ENCODE measurements at regions of chr4 and their contacts with region 1.

Region 1: GRCh38 chr4:98694076-98694475 is 35.7 kb upstream of the TSPAN5 start:
- DNase-seq: no peak
- ATAC-seq: no peak

Region 2: GRCh38 chr4:98682719-98683118 is 11.4 kb before region 1 on chr4:
- intact Hi-C with region 1: loop called (anchors 1 kb)
- DNase-seq: no peak
- ATAC-seq: no peak

Measured in sciatic nerve (tissue), 2 donors.